ENCODE measurements at regions of chr20 and their contacts with region 1.

Region 1: GRCh38 chr20:50460460-50461267 is 49.5 kb upstream of the PTPN1 start:
- DNase-seq: peak; percentile 86 to 90
- ATAC-seq: peak; percentile 87 to 92 (median 90)
- H3K4me3 ChIP-seq: no peak overlapping the region
- H3K27ac ChIP-seq: peak overlapping the region in 9 of 10 donors; percentile 41 to 70 (median 52)
- H3K4me1 ChIP-seq: peaks cover 6 to 44% (median 22%) of the 10 kb centered on the region in 9 donors
- H3K27me3 ChIP-seq: no peaks in the 10 kb centered on the region
- CTCF ChIP-seq: peak; percentile 71 to 97 (median 94)

Region 2: DNA sequence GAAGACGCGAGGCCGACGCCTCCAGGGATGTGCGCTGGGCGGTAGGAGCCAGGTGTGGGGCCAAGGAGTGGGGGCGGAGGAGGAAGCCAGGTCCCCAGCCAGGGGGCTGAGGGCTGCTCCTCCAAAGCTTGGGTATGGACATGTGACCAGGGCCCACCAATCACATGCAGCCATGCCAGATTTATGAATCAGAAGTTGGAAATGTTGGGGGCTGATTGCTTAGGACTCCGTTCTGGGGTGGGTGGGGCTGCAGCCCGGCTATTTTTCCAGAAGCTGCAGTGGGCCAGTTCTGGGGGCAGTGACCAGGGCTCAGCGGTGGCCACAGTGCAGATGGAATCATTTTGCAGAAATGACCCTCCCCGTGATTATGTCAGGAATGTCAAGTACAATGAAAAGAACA is 174.1 kb before region 1 on chr20:
- intact Hi-C with region 1: loop called in 2 of 10 experiments (anchors 10 kb)
- DNase-seq: peak in 1 of 2 donors; percentile 56
- ATAC-seq: peak in 7 of 8 donors; percentile 37 to 79 (median 61)
- H3K4me3 ChIP-seq: peak overlapping the region in 5 of 10 donors; percentile 7 to 31 (median 14)
- H3K27ac ChIP-seq: peak overlapping the region; percentile 39 to 96 (median 84)
- H3K4me1 ChIP-seq: peaks cover 10 to 62% (median 37%) of the 10 kb centered on the region in 9 donors
- H3K27me3 ChIP-seq: no peaks in the 10 kb centered on the region
- CTCF ChIP-seq: no peak

Region 3: DNA sequence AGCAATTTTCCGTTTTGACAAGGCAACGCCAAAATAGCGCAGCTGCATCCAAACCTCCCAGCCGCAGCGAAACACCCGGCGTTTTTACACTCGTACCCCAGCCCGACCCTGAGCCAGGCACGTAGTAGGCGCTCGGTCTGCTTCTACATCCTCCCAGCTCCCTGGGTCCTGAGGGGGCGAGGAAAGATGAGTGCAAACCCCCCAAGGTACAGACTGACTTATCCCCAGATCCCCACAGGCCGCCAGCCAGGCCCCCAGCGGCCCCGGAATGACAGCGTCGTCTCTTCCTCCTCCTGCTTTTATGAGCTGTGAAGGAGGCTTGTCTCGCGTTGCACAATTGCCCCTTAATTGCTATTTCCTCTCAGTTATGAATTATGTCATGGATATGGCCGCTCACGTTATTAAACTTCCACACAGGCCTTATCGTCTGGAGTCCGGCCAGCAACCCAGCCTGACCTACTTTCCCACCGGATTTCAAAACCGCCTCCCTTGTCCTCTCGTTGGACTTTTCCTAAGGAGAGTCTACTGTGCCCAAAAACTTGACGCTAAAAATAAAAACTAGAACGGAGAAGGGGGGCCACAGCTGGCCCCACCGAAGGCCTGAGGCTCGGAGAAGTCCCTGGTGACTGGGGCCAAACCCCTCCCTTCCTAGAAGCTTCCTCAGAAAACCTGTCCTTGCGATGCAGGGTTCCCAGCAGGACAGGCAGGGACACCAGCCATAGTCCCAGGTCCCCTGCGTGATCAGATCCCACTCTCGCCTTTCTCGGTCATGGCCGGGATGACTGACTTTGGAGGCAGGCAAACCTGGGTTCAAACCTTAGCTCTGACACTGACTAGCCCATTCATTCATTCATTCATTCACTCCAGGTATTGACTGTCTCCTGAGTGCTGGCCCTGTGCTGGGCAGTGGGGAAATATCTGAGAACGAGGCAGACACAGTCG is 81.3 kb before region 1 on chr20:
- intact Hi-C with region 1: loop called in 1 of 10 experiments (anchors 5 kb)
- DNase-seq: peak; percentile 89 to 94
- ATAC-seq: peak; percentile 84 to 92 (median 90)
- H3K4me3 ChIP-seq: peak overlapping the region in 8 of 10 donors; percentile 5 to 47 (median 33)
- H3K27ac ChIP-seq: peak overlapping the region; percentile 57 to 86 (median 81)
- H3K4me1 ChIP-seq: peaks cover 10 to 57% (median 24%) of the 10 kb centered on the region in 9 donors
- H3K27me3 ChIP-seq: no peaks in the 10 kb centered on the region
- CTCF ChIP-seq: no peak

Region 4: GRCh38 chr20:50415516-50416113 is 45.0 kb before region 1 on chr20:
- intact Hi-C with region 1: loop called in 1 of 10 experiments (anchors 5 kb)
- DNase-seq: peak; percentile 99 to 100
- ATAC-seq: peak; percentile 96 to 99 (median 99)
- H3K4me3 ChIP-seq: peak overlapping the region in 4 of 10 donors; percentile 7 to 12 (median 11)
- H3K27ac ChIP-seq: peak overlapping the region; percentile 89 to 99 (median 96)
- H3K4me1 ChIP-seq: peaks cover 13 to 52% (median 31%) of the 10 kb centered on the region in 9 donors
- H3K27me3 ChIP-seq: no peaks in the 10 kb centered on the region
- CTCF ChIP-seq: peak in 2 of 9 donors; percentile 7 to 12

Region 5: GRCh38 chr20:50567860-50568548 is 107.3 kb after region 1 on chr20:
- intact Hi-C with region 1: no loop called
- DNase-seq: no peak
- ATAC-seq: no peak
- H3K4me3 ChIP-seq: no peak overlapping the region
- H3K27ac ChIP-seq: no peak overlapping the region
- H3K4me1 ChIP-seq: peaks cover 6 to 60% (median 37%) of the 10 kb centered on the region in 9 donors
- H3K27me3 ChIP-seq: no peaks in the 10 kb centered on the region
- CTCF ChIP-seq: no peak

Region 6: DNA sequence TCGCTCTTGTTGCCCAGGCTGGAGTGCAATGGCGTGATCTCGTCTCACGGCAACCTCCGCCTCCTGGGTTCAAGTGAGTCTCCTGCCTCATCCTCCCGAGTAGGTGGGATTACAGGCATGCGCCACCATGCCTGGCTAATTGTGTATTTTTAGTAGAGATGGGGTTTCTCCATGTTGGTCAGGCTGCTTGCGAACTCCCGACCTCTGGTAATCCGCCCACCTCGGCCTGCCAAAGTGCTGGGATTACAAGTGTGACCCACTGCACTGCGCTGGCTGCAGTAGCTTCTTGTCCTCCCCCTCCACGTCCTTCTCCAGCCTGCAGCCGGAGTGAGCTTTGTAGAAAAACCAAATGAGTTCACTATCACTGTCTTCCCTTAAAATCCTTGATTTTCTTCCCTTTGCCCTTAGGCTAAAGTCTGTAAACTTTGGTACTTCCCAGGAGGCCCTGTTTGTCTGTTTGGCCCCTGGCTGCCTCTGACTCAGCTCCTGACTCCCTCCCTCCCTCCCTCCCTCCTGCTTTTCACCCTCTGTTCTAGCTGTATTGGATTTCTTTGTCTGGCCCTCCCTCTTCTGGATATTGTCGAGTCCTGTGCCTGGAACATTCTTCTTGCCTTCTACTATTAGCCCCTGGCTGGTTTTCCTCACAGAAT is 283.6 kb after region 1 on chr20:
- intact Hi-C with region 1: loop called in 1 of 10 experiments (anchors 10 kb)
- DNase-seq: peak; percentile 56 to 71
- ATAC-seq: peak; percentile 86 to 96 (median 91)
- H3K4me3 ChIP-seq: no peak overlapping the region
- H3K27ac ChIP-seq: peak overlapping the region; percentile 69 to 88 (median 82)
- H3K4me1 ChIP-seq: peaks cover 2 to 58% (median 30%) of the 10 kb centered on the region in 9 donors
- H3K27me3 ChIP-seq: no peaks in the 10 kb centered on the region
- CTCF ChIP-seq: peak in 7 of 9 donors; percentile 23 to 60 (median 37)

Region 7: DNA sequence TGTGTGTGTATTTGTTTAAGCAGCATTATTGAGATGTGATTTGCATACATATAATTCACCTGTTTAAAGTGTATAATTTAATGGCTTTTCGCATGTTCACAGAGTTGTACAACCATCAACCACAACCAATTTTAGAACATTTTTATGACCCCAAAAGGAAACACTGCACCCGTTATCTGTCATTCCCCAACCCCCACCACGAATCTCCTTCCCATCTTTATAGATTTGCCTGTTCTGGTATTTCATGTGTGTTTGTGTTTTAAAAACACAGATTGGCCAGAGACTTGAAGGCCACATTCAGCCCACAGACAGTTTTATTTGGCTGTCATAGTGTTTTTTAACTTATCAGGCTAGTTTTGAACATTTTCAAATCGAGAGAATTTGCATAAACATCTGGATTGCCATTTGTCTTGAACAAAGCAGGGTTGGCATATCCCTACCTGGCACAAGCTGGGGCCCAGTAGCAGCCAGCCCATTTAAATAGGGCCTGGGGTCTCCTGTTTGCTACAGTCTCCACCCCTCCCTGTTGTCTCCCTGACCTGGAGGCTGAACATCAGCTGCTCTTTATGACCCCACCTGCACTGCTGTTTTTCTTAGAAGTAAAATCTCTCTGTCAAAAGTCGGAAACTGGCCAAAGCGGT is 344.5 kb after region 1 on chr20:
- intact Hi-C with region 1: no loop called
- DNase-seq: no peak
- ATAC-seq: no peak
- H3K4me3 ChIP-seq: no peak overlapping the region
- H3K27ac ChIP-seq: peak overlapping the region in 1 of 10 donors; percentile 10
- H3K4me1 ChIP-seq: no peaks in the 10 kb centered on the region
- H3K27me3 ChIP-seq: peaks cover 0 to 3% (median 0%) of the 10 kb centered on the region in 7 donors
- CTCF ChIP-seq: no peak

Region 8: GRCh38 chr20:51159303-51159702 is 698.6 kb after region 1 on chr20:
- intact Hi-C with region 1: no loop called
- DNase-seq: no peak
- ATAC-seq: no peak
- H3K4me3 ChIP-seq: no peak overlapping the region
- H3K27ac ChIP-seq: no peak overlapping the region
- H3K4me1 ChIP-seq: peaks cover 0 to 5% (median 0%) of the 10 kb centered on the region in 9 donors
- H3K27me3 ChIP-seq: peaks cover 0 to 85% (median 67%) of the 10 kb centered on the region in 7 donors
- CTCF ChIP-seq: no peak

Measured in heart right ventricle (tissue), 16 donors.